CD4-positive, alpha-beta T cell (primary cell): ENCODE measurements at regions of chr17 and their contacts with region 1.

Region 1: GRCh38 chr17:75034236-75034908 is 12.4 kb downstream of the ATP5PD start:
- DNase-seq: peak; percentile 55 to 88 (median 76)
- ATAC-seq: peak; percentile 12
- H3K4me3 ChIP-seq: peak overlapping the region; percentile 73
- H3K4me3 Mint-ChIP-seq: peak overlapping the region; percentile 92
- H3K27ac ChIP-seq: peak overlapping the region; percentile 26 to 46
- H3K27ac Mint-ChIP-seq: peak overlapping the region; percentile 98
- H3K4me1 ChIP-seq: peaks cover 56% of the 10 kb centered on the region
- H3K4me1 Mint-ChIP-seq: peaks cover 65% of the 10 kb centered on the region
- H3K27me3 ChIP-seq: no peaks in the 10 kb centered on the region
- H3K27me3 Mint-ChIP-seq: peaks cover 27% of the 10 kb centered on the region
- CTCF ChIP-seq: no peak

Region 2: GRCh38 chr17:74892974-74893911 is 141.1 kb before region 1 on chr17 and contains the start of gene FADS6:
- CTCF ChIA-PET with region 1: no interaction called
- POLR2A ChIA-PET with region 1: no interaction called
- intact Hi-C with region 1: no loop called
- DNase-seq: peak in 3 of 14 experiments; percentile 14 to 37 (median 17)
- ATAC-seq: peak; percentile 68
- H3K4me3 ChIP-seq: peak within 1 kb of the TSS; percentile 25
- H3K4me3 Mint-ChIP-seq: peak within 1 kb of the TSS; percentile 80
- H3K27ac ChIP-seq: no peak within 1 kb of the TSS
- H3K27ac Mint-ChIP-seq: no peak within 1 kb of the TSS
- H3K4me1 ChIP-seq: peaks cover 14% of the 10 kb centered on the region
- H3K4me1 Mint-ChIP-seq: peaks cover 5% of the 10 kb centered on the region
- H3K27me3 ChIP-seq: peaks cover 25 to 34% of the 10 kb centered on the region in 2 experiments
- H3K27me3 Mint-ChIP-seq: peaks cover 45% of the 10 kb centered on the region
- CTCF ChIP-seq: no peak
- total RNA-seq, gene FADS6: not detected

Region 3: GRCh38 chr17:74972107-74972972 is 62.0 kb before region 1 on chr17 and contains the start of gene HID1:
- CTCF ChIA-PET with region 1: no interaction called
- POLR2A ChIA-PET with region 1: interaction called, 11 read pairs
- intact Hi-C with region 1: no loop called
- DNase-seq: peak; percentile 74 to 90 (median 81)
- ATAC-seq: peak; percentile 88
- H3K4me3 ChIP-seq: peak within 1 kb of the TSS; percentile 59
- H3K4me3 Mint-ChIP-seq: peak within 1 kb of the TSS; percentile 89
- H3K27ac ChIP-seq: no peak within 1 kb of the TSS
- H3K27ac Mint-ChIP-seq: peak within 1 kb of the TSS; percentile 55
- H3K4me1 ChIP-seq: peaks cover 21% of the 10 kb centered on the region
- H3K4me1 Mint-ChIP-seq: peaks cover 5% of the 10 kb centered on the region
- H3K27me3 ChIP-seq: peaks cover 4 to 14% of the 10 kb centered on the region in 2 experiments
- H3K27me3 Mint-ChIP-seq: peaks cover 4% of the 10 kb centered on the region
- CTCF ChIP-seq: no peak
- total RNA-seq, gene HID1: 31.8 to 31.9 TPM

Region 4: GRCh38 chr17:74981979-74982662 is 52.3 kb before region 1 on chr17:
- CTCF ChIA-PET with region 1: no interaction called
- POLR2A ChIA-PET with region 1: interaction called, 5 read pairs
- intact Hi-C with region 1: loop called in 1 of 2 experiments (anchors 2 kb)
- DNase-seq: peak; percentile 61 to 93 (median 77)
- ATAC-seq: peak; percentile 91
- H3K4me3 ChIP-seq: peak overlapping the region; percentile 80
- H3K4me3 Mint-ChIP-seq: peak overlapping the region; percentile 91
- H3K27ac ChIP-seq: peak overlapping the region; percentile 53 to 71
- H3K27ac Mint-ChIP-seq: peak overlapping the region; percentile 89
- H3K4me1 ChIP-seq: peaks cover 26% of the 10 kb centered on the region
- H3K4me1 Mint-ChIP-seq: peaks cover 29% of the 10 kb centered on the region
- H3K27me3 ChIP-seq: no peaks in the 10 kb centered on the region
- H3K27me3 Mint-ChIP-seq: peaks cover 2% of the 10 kb centered on the region
- CTCF ChIP-seq: no peak

Region 5: GRCh38 chr17:75077496-75078283 is 43.3 kb after region 1 on chr17:
- CTCF ChIA-PET with region 1: no interaction called
- POLR2A ChIA-PET with region 1: interaction called, 4 read pairs
- intact Hi-C with region 1: loop called in 1 of 2 experiments (anchors 5 kb)
- DNase-seq: peak; percentile 29 to 74 (median 50)
- ATAC-seq: peak; percentile 93
- H3K4me3 ChIP-seq: peak overlapping the region; percentile 48
- H3K4me3 Mint-ChIP-seq: peak overlapping the region; percentile 74
- H3K27ac ChIP-seq: peak overlapping the region in 1 of 2 donors; percentile 29
- H3K27ac Mint-ChIP-seq: peak overlapping the region; percentile 68
- H3K4me1 ChIP-seq: peaks cover 28% of the 10 kb centered on the region
- H3K4me1 Mint-ChIP-seq: peaks cover 9% of the 10 kb centered on the region
- H3K27me3 ChIP-seq: no peaks in the 10 kb centered on the region
- H3K27me3 Mint-ChIP-seq: no peaks in the 10 kb centered on the region
- CTCF ChIP-seq: no peak

Region 6: DNA sequence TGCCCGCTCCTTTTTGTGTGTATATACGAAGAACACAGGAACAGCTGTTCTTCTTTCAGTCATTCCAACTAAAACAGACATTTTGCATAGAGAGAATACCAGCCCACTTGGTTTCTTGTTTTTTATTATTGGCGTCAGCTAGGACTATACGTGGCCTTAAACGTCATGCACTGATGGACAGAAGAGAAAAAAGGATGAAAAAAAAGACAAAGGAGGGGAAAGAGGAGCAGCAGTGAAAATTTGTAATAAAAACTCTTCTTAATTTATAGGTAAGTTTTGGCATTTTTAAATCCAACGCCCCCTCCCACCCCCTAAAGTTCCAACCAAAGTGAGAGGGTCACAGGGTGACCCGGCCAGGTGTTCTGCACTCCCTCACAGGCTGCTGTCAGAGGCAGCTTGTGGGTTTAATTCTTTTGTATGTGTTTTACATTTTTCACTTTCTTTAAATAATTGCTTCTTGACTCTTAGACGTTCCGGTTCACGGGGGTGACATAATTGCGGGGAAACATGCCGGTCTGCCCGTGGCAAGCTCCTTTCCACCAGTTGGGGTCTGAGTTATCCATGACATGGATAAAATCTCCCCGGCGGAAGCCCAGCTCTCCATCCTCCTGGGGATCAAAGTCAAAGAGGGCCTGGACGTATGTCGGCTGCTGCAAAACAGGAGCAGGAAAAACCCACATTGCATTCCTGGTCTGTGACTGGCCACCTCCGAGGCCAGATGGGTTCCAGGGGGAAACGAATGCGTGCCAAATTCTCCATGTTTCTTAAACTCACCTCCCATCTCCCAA is 285.7 kb after region 1 on chr17:
- CTCF ChIA-PET with region 1: no interaction called
- POLR2A ChIA-PET with region 1: no interaction called
- intact Hi-C with region 1: no loop called
- DNase-seq: no peak
- ATAC-seq: no peak
- H3K4me3 ChIP-seq: no peak overlapping the region
- H3K4me3 Mint-ChIP-seq: no peak overlapping the region
- H3K27ac ChIP-seq: no peak overlapping the region
- H3K27ac Mint-ChIP-seq: no peak overlapping the region
- H3K4me1 ChIP-seq: peaks cover 11% of the 10 kb centered on the region
- H3K4me1 Mint-ChIP-seq: peaks cover 9% of the 10 kb centered on the region
- H3K27me3 ChIP-seq: no peaks in the 10 kb centered on the region
- H3K27me3 Mint-ChIP-seq: no peaks in the 10 kb centered on the region
- CTCF ChIP-seq: no peak